ENCODE measurements at regions of chr2 and their contacts with region 1.

Region 1: GRCh38 chr2:60881047-60881932 is at the start of gene REL:
- DNase-seq: peak; percentile 84 to 94 (median 88)
- ATAC-seq: peak; percentile 84 to 85
- H3K4me3 Mint-ChIP-seq: peak within 1 kb of the TSS; percentile 90 to 99 (median 96)
- H3K27ac Mint-ChIP-seq: peak within 1 kb of the TSS; percentile 92 to 100 (median 98)
- H3K4me1 Mint-ChIP-seq: peaks cover 18 to 40% (median 32%) of the 10 kb centered on the region in 4 donors
- H3K27me3 Mint-ChIP-seq: no peaks in the 10 kb centered on the region
- polyA plus RNA-seq, gene REL: 12.5 to 20.0 (median 13.7) TPM

Region 2: GRCh38 chr2:60818272-60818671 is 63.0 kb before region 1 on chr2:
- POLR2A ChIA-PET with region 1: interaction called, 23 read pairs
- DNase-seq: peak in 3 of 10 donors; percentile 15 to 64 (median 16)
- ATAC-seq: no peak
- H3K4me3 Mint-ChIP-seq: peak overlapping the region in 2 of 10 donors; percentile 14 to 70
- H3K27ac Mint-ChIP-seq: peak overlapping the region in 7 of 10 donors; percentile 6 to 97 (median 90)
- H3K4me1 Mint-ChIP-seq: peaks cover 18 to 45% (median 40%) of the 10 kb centered on the region in 4 donors
- H3K27me3 Mint-ChIP-seq: peaks cover 0 to 12% (median 3%) of the 10 kb centered on the region in 5 donors

Region 3: DNA sequence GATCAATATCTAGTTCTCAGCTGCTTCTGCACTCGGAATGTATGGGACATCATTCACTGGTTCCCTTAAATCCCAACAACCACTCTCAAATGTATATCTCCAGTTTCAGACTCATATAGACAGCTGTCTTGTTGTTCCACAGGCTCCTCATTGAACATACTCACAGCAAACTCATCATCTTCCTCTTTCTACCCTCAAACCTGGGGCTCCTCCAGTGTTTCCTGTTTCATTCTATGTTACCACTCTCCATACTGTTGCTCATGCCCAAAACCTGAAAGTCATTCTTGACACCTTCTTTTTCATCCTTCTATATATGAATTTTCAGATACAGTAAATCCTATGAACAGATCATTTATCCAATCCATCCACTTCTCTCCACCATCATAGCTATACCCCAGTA is 18.6 kb before region 1 on chr2:
- POLR2A ChIA-PET with region 1: interaction called, 74 read pairs
- DNase-seq: no peak
- ATAC-seq: no peak
- H3K4me3 Mint-ChIP-seq: no peak overlapping the region
- H3K27ac Mint-ChIP-seq: no peak overlapping the region
- H3K4me1 Mint-ChIP-seq: peaks cover 7 to 31% (median 11%) of the 10 kb centered on the region in 4 donors
- H3K27me3 Mint-ChIP-seq: peaks cover 0 to 3% (median 0%) of the 10 kb centered on the region in 5 donors

Region 4: DNA sequence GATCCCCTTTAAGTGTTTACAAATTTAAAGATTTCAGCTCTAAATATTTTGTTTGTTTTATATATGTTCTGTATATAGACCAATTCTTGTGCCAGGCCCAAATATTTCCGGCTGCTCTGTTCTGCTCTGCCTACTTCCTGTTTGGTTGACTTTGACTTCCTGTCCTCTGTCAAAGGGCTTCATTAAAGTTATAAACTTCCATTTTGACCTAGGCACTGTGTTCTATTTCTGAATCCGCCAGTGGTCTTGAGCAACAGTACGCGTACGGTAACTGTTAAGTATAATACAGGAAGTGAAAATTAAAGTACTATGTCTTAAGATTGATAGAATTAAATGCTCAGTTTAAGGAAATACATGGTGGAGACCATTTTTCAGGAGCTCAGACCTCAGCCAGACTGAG is 13.4 kb before region 1 on chr2:
- POLR2A ChIA-PET with region 1: interaction called, 74 read pairs
- DNase-seq: peak in 7 of 10 donors; percentile 17 to 63 (median 36)
- ATAC-seq: peak; percentile 93 to 98
- H3K4me3 Mint-ChIP-seq: peak overlapping the region in 9 of 10 donors; percentile 49 to 79 (median 64)
- H3K27ac Mint-ChIP-seq: peak overlapping the region; percentile 72 to 97 (median 88)
- H3K4me1 Mint-ChIP-seq: peaks cover 11 to 41% (median 18%) of the 10 kb centered on the region in 4 donors
- H3K27me3 Mint-ChIP-seq: no peaks in the 10 kb centered on the region